Ascending aorta (tissue), 2 donors: ENCODE measurements at regions of chr3 and their contacts with region 1.

Region 1: DNA sequence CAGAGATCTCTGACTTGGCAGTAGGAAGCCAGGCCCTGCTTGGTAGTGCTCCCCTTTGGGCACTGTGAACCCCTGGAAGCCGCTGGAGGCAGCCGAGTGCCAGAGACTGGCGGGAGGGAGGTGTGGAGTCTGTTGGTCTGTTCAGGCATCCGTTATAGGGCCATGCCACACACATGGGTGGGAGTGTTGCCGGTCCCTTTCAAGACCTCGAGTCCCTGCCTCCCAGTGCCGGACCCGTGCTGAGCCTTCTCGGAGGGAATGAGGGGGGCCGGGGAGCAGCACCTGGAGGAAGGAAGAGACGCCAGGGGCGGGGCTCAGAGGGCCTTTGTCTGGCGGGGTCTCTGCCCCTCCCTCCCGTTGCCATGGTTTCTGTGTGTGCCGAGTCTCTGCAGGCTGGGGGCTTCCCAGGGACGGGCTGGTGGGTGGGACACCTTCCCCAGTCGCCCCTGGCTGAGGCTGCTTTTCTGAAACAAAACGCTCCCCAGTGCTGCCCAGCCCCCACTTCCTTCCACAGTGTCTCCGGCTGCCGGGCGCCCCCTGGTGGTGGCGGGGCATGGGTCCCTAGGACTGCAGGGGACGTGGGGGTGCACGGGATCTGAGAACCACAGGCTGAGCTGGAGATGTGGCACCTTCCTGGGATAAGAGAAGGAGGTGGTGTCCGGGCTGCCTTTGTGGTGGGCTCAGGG is 10.0 kb downstream of the GNAI2 start:
- DNase-seq: peak; percentile 79 to 95
- H3K4me3 ChIP-seq: peak overlapping the region; percentile 37 to 50
- H3K27ac ChIP-seq: peak overlapping the region; percentile 88 to 92
- H3K4me1 ChIP-seq: peaks cover 51 to 88% of the 10 kb centered on the region in 2 donors
- H3K27me3 ChIP-seq: no peaks in the 10 kb centered on the region
- CTCF ChIP-seq: peak; percentile 97 to 99 (median 97)

Region 2: DNA sequence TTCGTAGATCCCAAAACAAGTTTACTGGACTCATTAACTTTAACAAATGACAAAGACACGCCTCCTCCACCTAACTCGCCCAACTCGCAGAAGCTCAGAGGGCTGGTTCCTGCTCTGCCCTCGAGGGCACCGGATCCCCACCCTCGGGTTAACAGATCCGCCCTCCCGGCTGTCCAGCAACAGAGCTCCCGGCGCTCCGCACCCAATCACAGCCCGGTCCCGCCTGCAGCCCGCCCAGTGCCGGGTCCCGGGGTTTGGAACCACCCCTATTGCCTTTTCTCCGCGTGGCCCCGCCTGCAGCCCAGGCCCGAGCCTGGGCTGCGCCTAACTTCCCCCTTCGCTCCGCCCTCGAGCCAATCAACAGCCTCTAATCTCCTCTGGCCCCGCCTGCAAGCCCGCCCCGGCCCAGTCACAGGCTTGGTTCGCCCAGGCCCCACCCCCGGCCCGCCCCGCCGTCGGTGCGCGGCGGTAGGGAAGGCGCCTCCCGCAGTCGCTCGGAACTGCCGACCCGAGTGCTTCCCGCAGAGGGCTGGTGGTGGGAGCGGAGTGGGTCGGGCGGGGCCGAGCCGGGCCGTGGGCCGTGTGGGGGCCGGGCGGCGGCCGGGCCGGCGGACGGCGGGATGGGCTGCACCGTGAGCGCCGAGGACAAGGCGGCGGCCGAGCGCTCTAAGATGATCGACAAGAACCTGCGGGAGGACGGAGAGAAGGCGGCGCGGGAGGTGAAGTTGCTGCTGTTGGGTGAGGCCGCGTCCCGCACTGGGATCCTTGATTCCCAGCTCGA is 10.1 kb before region 1 on chr3 and contains the start of gene GNAI2:
- intact Hi-C with region 1: loop called (anchors 1 kb)
- DNase-seq: peak; percentile 98 to 99
- H3K4me3 ChIP-seq: peak within 1 kb of the TSS; percentile 96 to 97
- H3K27ac ChIP-seq: peak within 1 kb of the TSS; percentile 92 to 95
- H3K4me1 ChIP-seq: peaks cover 22 to 23% of the 10 kb centered on the region in 2 donors
- H3K27me3 ChIP-seq: no peaks in the 10 kb centered on the region
- CTCF ChIP-seq: peak in 1 of 3 experiments; percentile 32
- total RNA-seq, gene GNAI2: 283 TPM